ENCODE measurements at regions of chr9 and their contacts with region 1.

Region 1: DNA sequence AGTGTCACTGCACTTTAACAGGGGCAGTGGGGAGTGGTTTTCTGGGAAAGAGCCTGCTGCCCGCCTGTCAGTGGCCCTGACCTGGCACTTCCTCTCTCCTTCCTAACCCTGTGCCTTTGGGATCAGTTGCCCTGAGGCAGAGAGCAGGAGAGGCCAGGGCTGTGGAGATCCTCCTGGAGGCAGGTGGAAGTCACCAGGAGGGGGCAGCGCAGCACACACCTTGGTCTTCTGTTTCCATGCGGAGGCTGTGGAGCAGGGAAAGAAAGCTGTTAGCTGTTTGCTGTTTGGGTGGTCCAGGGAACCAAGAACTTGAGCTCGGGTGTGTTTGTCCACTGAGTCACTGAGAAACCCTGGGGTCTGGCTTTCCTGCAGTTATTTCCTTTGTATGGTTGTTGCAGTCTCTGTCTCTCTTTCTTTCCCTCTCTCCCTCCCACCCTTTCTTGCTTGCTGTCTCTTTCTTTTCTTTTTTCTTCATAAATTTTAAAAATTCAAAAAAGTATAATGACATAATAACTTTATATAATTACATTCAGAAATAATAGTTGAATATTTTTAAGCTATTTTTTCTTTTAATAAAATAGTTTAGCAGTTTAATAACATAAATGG is 28.1 kb downstream of the NTRK2 start:
- DNase-seq: no peak
- H3K4me3 ChIP-seq: no peak overlapping the region
- CTCF ChIP-seq: peak; percentile 92

Region 2: DNA sequence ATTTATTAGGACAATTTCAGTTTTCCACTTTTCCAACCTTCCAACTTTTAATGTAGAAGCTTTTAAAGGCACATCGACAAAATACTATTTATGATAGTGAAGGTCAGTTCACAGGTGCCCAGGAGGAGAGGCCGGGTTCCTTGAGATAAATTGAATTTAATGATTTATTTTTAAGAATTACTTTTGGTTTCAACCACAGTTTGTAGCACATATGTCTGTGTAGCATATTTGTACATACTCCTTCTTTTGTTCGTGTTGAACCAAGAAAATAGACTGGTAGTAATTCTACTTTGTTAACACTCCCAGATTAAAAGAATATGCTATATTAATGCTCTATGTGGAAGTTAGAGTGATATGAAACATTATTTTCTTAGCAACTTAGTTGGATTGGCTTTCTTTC is 18.6 kb after region 1 on chr9:
- CTCF ChIA-PET with region 1: interaction called, 10 read pairs
- POLR2A ChIA-PET with region 1: no interaction called
- DNase-seq: no peak
- H3K4me3 ChIP-seq: no peak overlapping the region
- CTCF ChIP-seq: no peak

Region 3: DNA sequence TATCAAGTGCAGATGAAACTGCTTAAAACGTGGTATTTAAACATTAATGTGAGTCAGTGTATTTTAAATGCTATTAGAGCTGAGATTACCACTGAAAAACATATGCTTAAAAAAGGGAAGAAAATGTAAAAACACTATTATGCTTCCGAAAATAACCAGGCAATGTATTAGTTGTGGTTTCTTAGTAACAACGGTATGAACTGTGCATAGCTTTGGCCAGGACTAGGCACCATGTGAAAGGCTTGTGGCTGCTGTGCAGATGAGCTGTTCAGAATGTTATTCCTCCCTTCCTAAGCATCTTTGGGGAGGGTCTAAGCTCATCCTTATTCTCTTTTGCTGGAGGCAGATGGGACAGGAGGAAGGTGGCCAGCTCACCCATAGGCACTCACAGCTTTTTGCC is 56.8 kb after region 1 on chr9:
- CTCF ChIA-PET with region 1: interaction called, 16 read pairs
- POLR2A ChIA-PET with region 1: no interaction called
- DNase-seq: no peak
- H3K4me3 ChIP-seq: no peak overlapping the region
- CTCF ChIP-seq: no peak

Region 4: GRCh38 chr9:85258823-85259370 is 561.3 kb after region 1 on chr9:
- CTCF ChIA-PET with region 1: interaction called, 31 read pairs
- POLR2A ChIA-PET with region 1: no interaction called
- DNase-seq: peak; percentile 19
- H3K4me3 ChIP-seq: peak overlapping the region; percentile 20
- CTCF ChIP-seq: peak; percentile 90